ENCODE measurements at regions of chr22 and their contacts with region 1.

Region 1: DNA sequence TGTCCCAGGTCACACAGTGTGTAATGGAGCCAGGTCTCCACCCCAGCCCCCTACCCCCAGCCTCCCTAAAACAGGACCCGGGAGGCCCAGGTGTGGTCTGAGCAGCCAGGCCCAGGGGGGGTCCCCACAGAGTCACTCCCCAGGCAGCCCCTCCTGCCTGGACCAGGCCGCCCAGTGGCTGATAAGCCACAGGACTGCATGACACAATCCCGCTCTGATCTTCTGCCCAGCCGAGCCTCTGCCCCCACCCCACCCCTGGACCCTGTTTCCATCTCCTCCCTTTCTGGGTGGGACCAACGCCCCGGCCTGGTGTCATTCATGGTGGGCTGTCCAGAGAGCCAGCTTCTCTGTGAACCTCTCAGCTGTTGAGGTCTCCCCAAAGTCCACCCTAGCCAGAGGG is 7.8 kb upstream of the LIF start:
- DNase-seq: no peak
- H3K4me3 ChIP-seq: no peak overlapping the region
- H3K27ac ChIP-seq: no peak overlapping the region
- H3K4me1 ChIP-seq: peaks cover 0 to 30% (median 25%) of the 10 kb centered on the region in 4 donors
- H3K27me3 ChIP-seq: peaks cover 0 to 5% (median 0%) of the 10 kb centered on the region in 3 donors
- CTCF ChIP-seq: no peak
- EP300 ChIP-seq: no peak
- POLR2A ChIP-seq: no peak

Region 2: GRCh38 chr22:30104501-30105156 is 149.7 kb before region 1 on chr22:
- intact Hi-C with region 1: loop called (anchors 2 kb)
- DNase-seq: no peak
- H3K4me3 ChIP-seq: no peak overlapping the region
- H3K27ac ChIP-seq: no peak overlapping the region
- H3K4me1 ChIP-seq: no peaks in the 10 kb centered on the region
- H3K27me3 ChIP-seq: peaks cover 0 to 8% (median 0%) of the 10 kb centered on the region in 3 donors
- CTCF ChIP-seq: no peak
- EP300 ChIP-seq: no peak
- POLR2A ChIP-seq: no peak

Region 3: GRCh38 chr22:30423982-30424963 is 170.0 kb after region 1 on chr22:
- intact Hi-C with region 1: no loop called
- DNase-seq: peak; percentile 100
- H3K4me3 ChIP-seq: peak overlapping the region; percentile 55 to 72 (median 63)
- H3K27ac ChIP-seq: peak overlapping the region; percentile 91 to 97 (median 94)
- H3K4me1 ChIP-seq: peaks cover 0 to 58% (median 49%) of the 10 kb centered on the region in 4 donors
- H3K27me3 ChIP-seq: no peaks in the 10 kb centered on the region
- CTCF ChIP-seq: no peak
- EP300 ChIP-seq: no peak
- POLR2A ChIP-seq: no peak

Measured in sigmoid colon (tissue), 7 donors.